ENCODE measurements at regions of chr10 and their contacts with region 1.

Region 1: GRCh38 chr10:75294866-75295701 is 59.3 kb upstream of the COMTD1 start:
- DNase-seq: peak; percentile 87
- ATAC-seq: peak; percentile 81

Region 2: GRCh38 chr10:75035975-75036708 is 258.9 kb before region 1 on chr10:
- intact Hi-C with region 1: no loop called
- DNase-seq: no peak
- ATAC-seq: no peak

Region 3: DNA sequence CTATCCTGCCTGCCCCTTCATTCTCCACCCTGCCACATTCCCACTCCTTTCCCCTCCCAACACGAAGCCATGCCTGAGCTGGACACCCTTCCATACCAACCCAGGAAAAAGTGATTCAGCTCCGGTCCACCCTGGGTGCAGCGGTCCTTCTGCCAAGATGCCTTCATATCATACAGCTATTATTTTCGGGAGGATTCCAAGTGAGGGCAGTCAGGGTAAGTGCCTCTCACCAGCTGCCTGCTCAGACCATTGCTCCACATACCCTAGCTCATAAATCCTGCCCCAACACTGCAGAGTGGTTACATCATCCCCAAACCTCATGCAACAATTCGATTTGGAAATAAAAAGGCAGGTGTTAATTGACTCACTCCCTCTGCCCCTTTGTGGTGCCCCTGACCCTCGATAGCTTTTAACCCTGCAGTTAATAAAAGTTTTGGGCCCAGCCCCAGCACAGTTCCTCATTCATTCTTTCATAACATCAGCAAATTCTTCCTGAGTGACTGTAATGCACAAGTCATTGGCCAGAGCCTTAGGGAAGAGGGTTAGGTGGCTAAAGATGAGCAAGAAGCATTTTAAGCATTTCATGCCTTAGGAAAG is 63.8 kb after region 1 on chr10:
- intact Hi-C with region 1: no loop called
- DNase-seq: no peak
- ATAC-seq: no peak

Region 4: DNA sequence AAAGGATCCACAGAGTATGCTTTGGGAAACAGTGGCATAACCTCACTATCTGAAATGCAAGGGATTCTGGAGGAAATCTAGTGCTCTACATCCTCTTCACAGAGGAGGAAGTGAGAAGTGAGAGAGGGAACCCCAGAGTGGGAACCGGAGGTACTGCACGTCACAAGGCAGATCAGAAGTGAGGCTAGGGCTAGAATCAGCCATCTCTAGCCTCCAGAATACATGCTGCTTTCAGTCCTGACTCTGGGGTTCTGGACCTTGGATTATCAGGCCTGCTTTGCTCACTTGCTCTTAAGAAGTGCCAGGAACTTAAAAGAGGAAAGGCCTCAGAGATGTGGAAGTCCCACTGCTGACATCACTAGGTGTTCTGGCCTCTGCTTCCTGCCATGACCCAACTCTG is 80.8 kb after region 1 on chr10:
- intact Hi-C with region 1: no loop called
- DNase-seq: no peak
- ATAC-seq: peak; percentile 60

Region 5: DNA sequence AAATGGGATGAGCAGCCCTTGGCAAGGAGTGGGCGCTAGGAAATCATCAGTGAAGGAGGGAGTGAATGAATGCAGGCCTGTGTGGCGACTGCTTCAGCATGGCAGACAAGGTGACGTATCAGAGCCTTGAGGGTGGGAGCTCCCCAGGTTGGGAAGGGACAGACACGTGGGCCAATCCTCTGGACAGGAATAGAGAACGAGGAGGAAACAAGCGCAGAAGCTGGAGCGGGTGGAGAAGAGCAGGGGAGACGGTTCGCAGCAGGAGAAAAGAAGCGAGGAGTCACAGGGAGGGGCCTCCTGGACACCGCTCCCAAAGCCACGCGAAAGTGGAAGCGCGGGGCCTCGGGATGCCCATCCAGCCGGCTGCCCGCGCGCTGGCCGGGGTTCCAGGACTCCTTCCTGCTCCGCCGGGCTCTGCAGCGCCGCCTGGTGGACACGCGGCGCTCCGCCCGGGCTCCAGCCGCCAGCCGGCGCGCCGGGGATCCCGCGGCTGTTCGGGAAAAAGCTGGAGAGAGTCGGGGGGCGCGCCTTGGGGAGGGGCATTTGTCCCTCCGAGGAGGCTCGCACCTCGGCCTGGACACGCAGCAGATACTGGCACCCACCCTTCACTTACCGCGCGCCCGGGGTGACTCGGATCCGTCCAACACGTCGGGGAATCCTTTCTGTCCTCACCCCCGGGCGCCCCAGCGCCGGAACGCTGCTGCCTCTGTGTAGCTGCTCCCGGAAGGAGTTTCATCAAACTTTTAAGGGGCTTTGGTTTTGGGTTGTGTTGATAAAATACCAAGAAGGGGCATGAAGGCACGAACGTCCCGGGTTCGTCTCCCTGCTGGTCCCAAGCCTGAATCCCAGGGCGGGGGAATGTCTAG is 100.2 kb after region 1 on chr10:
- intact Hi-C with region 1: loop called (anchors 2 kb)
- DNase-seq: peak; percentile 81
- ATAC-seq: peak; percentile 46